Naive thymus-derived CD4-positive, alpha-beta T cell (primary cell): ENCODE measurements at regions of chr14 and their contacts with region 1.

Region 1: DNA sequence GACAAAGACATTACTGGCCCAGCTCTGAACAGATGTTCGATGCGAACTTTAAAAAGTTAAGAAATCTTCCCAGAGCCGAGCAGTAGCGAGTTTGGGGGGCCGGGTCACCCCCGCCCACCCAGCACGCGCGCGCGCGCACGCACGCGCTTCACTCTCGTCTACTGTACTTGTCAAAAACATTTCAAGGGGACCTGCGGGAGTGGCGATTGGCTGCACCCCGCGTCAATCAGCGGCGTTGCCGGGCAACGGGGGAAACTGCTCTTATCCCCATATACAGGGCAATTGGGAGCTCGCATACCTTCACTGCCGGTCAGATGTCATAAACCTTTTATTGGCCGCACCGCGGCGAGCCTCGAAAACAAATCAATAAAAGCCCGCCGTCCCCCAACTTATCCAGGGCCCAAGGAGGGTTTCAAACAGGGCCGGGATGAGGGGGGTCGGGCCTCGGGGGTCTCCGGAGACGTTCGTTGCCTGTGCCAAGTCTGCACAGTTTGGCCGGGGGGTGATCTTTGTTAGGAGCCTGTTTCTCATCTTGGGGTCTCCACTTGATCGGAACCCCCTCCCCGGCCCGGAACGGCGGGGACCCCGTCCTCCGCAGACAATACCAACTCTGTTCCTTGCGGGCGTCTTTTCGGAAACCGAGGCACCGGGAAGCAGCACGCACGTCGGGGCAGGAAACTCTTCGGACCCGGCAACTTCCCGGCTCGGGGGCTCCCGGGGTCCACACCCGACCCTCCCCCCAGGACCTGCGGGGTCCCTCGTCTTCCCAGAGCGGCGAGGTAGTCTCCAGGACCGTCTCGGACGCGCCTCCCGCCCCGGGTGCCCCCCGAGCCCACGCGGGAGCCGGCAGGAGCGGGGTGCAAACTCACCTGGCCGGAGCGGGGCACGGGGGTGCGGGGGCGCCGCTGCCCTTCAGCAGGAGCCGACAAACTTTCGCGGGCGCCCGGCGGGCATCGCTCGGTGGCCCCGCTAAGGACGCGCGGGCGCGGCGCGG is 734 bp downstream of the FOXN3 start:
- DNase-seq: peak; percentile 97 to 100 (median 98)
- ATAC-seq: peak; percentile 82
- H3K4me3 ChIP-seq: peak overlapping the region; percentile 83
- H3K4me3 Mint-ChIP-seq: peak overlapping the region; percentile 87 to 97 (median 94)
- H3K27ac ChIP-seq: peak overlapping the region; percentile 76
- H3K27ac Mint-ChIP-seq: peak overlapping the region; percentile 81 to 94 (median 90)
- H3K4me1 ChIP-seq: peaks cover 11 to 20% of the 10 kb centered on the region in 2 donors
- H3K4me1 Mint-ChIP-seq: peaks cover 37 to 70% (median 63%) of the 10 kb centered on the region in 7 donors
- H3K27me3 ChIP-seq: no peaks in the 10 kb centered on the region
- H3K27me3 Mint-ChIP-seq: peaks cover 0 to 2% (median 0%) of the 10 kb centered on the region in 5 donors

Region 2: GRCh38 chr14:88792572-88793258 is 623.6 kb before region 1 on chr14 and contains the start of gene EML5:
- CTCF ChIA-PET with region 1: no interaction called
- POLR2A ChIA-PET with region 1: no interaction called
- intact Hi-C with region 1: loop called in 1 of 2 experiments (anchors 5 kb)
- DNase-seq: peak; percentile 78 to 89 (median 86)
- ATAC-seq: peak; percentile 93
- H3K4me3 ChIP-seq: peak within 1 kb of the TSS; percentile 87
- H3K4me3 Mint-ChIP-seq: peak within 1 kb of the TSS; percentile 83 to 93 (median 91)
- H3K27ac ChIP-seq: peak within 1 kb of the TSS; percentile 78
- H3K27ac Mint-ChIP-seq: peak within 1 kb of the TSS; percentile 42 to 94 (median 77)
- H3K4me1 ChIP-seq: peaks cover 7 to 10% of the 10 kb centered on the region in 2 donors
- H3K4me1 Mint-ChIP-seq: peaks cover 8 to 29% (median 19%) of the 10 kb centered on the region in 7 donors
- H3K27me3 ChIP-seq: no peaks in the 10 kb centered on the region
- H3K27me3 Mint-ChIP-seq: peaks cover 0 to 36% (median 0%) of the 10 kb centered on the region in 5 donors
- total RNA-seq, gene EML5: 1.3 to 6.4 (median 5.4) TPM

Region 3: GRCh38 chr14:89276424-89276975 is 139.8 kb before region 1 on chr14:
- CTCF ChIA-PET with region 1: no interaction called
- POLR2A ChIA-PET with region 1: no interaction called
- intact Hi-C with region 1: loop called in 1 of 2 experiments (anchors 1 kb)
- DNase-seq: peak in 1 of 9 donors; percentile 86
- ATAC-seq: peak; percentile 74
- H3K4me3 ChIP-seq: no peak overlapping the region
- H3K4me3 Mint-ChIP-seq: peak overlapping the region in 3 of 10 donors; percentile 39 to 75 (median 45)
- H3K27ac ChIP-seq: no peak overlapping the region
- H3K27ac Mint-ChIP-seq: peak overlapping the region in 6 of 9 donors; percentile 23 to 96 (median 47)
- H3K4me1 ChIP-seq: peaks cover 8 to 14% of the 10 kb centered on the region in 2 donors
- H3K4me1 Mint-ChIP-seq: peaks cover 49 to 91% (median 74%) of the 10 kb centered on the region in 7 donors
- H3K27me3 ChIP-seq: no peaks in the 10 kb centered on the region
- H3K27me3 Mint-ChIP-seq: no peaks in the 10 kb centered on the region

Region 4: DNA sequence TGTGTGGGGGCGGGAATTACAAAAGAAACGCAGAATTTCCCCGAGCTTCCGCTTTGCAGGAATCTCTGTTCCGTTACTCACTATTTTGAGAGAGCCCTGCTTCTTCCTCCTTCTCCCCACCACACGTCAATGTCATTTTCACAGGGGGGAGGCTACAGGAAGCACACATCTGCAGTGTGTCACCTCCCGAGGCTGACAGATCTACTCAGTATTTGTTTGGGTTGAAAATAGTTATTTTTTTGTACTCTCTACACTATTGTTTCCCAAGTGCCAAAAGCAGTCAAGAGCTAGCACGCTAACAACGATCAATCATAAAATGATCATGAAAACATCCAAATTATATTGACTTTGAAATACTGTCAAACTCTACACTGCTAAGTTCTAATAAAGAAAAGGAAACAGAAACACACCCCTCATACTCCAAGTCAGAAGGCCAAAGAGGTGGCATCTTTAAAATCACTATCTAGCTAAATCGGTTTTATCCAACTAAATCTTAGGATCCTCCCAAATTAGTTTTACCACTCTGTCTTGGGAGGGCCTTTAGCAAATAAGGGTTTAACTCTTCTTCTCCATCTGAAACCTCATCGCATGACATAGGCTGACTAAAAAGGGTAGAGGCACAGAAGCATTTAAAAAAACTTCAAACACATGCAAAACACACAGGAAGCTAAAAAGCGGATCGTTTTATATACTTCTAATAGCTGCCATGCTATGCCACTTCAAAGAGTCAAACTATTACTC is 51.1 kb before region 1 on chr14:
- CTCF ChIA-PET with region 1: no interaction called
- POLR2A ChIA-PET with region 1: no interaction called
- intact Hi-C with region 1: loop called (anchors 1 to 2 kb)
- DNase-seq: peak in 8 of 9 donors; percentile 39 to 82 (median 66)
- ATAC-seq: peak; percentile 96
- H3K4me3 ChIP-seq: peak overlapping the region; percentile 20
- H3K4me3 Mint-ChIP-seq: peak overlapping the region; percentile 79 to 91 (median 86)
- H3K27ac ChIP-seq: peak overlapping the region; percentile 77
- H3K27ac Mint-ChIP-seq: peak overlapping the region; percentile 84 to 97 (median 92)
- H3K4me1 ChIP-seq: peaks cover 18 to 26% of the 10 kb centered on the region in 2 donors
- H3K4me1 Mint-ChIP-seq: peaks cover 38 to 73% (median 63%) of the 10 kb centered on the region in 7 donors
- H3K27me3 ChIP-seq: no peaks in the 10 kb centered on the region
- H3K27me3 Mint-ChIP-seq: no peaks in the 10 kb centered on the region

Region 5: GRCh38 chr14:89618811-89619551 is 202.7 kb after region 1 on chr14:
- CTCF ChIA-PET with region 1: no interaction called
- POLR2A ChIA-PET with region 1: no interaction called
- intact Hi-C with region 1: loop called (anchors 1 kb)
- DNase-seq: peak; percentile 64 to 80 (median 77)
- ATAC-seq: peak; percentile 77
- H3K4me3 ChIP-seq: peak overlapping the region; percentile 82
- H3K4me3 Mint-ChIP-seq: peak overlapping the region; percentile 90 to 100 (median 97)
- H3K27ac ChIP-seq: peak overlapping the region; percentile 84
- H3K27ac Mint-ChIP-seq: peak overlapping the region; percentile 93 to 98 (median 97)
- H3K4me1 ChIP-seq: peaks cover 38 to 49% of the 10 kb centered on the region in 2 donors
- H3K4me1 Mint-ChIP-seq: peaks cover 41 to 74% (median 66%) of the 10 kb centered on the region in 7 donors
- H3K27me3 ChIP-seq: no peaks in the 10 kb centered on the region
- H3K27me3 Mint-ChIP-seq: no peaks in the 10 kb centered on the region

Region 6: GRCh38 chr14:89845385-89845784 is 429.1 kb after region 1 on chr14:
- CTCF ChIA-PET with region 1: no interaction called
- POLR2A ChIA-PET with region 1: no interaction called
- intact Hi-C with region 1: no loop called
- DNase-seq: no peak
- ATAC-seq: no peak
- H3K4me3 ChIP-seq: no peak overlapping the region
- H3K4me3 Mint-ChIP-seq: no peak overlapping the region
- H3K27ac ChIP-seq: no peak overlapping the region
- H3K27ac Mint-ChIP-seq: no peak overlapping the region
- H3K4me1 ChIP-seq: no peaks in the 10 kb centered on the region
- H3K4me1 Mint-ChIP-seq: no peaks in the 10 kb centered on the region
- H3K27me3 ChIP-seq: no peaks in the 10 kb centered on the region
- H3K27me3 Mint-ChIP-seq: peaks cover 0 to 14% (median 0%) of the 10 kb centered on the region in 5 donors

Region 7: DNA sequence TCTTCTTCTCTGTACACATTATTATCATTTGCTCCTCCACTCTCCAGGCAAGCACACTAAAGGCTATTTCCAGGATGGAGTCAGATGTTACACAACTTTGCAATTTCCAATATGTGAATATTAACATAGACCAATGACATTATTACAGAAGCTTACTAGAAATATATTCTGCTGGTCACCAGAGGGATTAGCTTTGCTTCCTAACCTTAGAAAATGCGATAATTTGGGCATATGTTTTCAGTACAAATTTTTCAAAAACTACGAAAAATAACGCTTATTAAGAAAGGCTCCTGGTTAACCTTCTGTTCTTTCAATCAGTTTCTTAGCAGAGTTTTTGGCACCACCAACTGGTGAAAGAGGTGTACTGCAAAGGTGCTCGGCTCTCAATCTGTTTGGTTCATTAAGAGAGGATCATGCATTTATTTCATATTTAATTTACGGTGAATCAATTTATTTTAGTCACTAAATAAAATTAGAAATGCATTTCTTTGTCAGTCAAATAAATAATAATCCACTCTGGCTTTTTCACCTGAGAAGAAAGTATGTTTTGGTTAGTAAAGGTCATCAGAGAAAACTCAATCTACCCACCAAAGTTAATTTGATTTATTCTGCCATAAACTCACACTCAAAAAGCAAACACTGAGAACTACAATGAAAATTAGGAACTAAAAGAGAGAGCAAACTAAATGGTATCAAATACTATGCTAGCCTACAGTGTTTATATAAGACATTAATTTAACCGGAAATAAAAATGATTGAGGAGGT is 499.0 kb after region 1 on chr14:
- CTCF ChIA-PET with region 1: no interaction called
- POLR2A ChIA-PET with region 1: no interaction called
- intact Hi-C with region 1: loop called (anchors 10 kb)
- DNase-seq: peak in 8 of 9 donors; percentile 22 to 65 (median 50)
- ATAC-seq: peak; percentile 65
- H3K4me3 ChIP-seq: no peak overlapping the region
- H3K4me3 Mint-ChIP-seq: no peak overlapping the region
- H3K27ac ChIP-seq: no peak overlapping the region
- H3K27ac Mint-ChIP-seq: no peak overlapping the region
- H3K4me1 ChIP-seq: peaks cover 0 to 4% of the 10 kb centered on the region in 2 donors
- H3K4me1 Mint-ChIP-seq: peaks cover 0 to 4% (median 3%) of the 10 kb centered on the region in 7 donors
- H3K27me3 ChIP-seq: no peaks in the 10 kb centered on the region
- H3K27me3 Mint-ChIP-seq: peaks cover 0 to 22% (median 11%) of the 10 kb centered on the region in 5 donors